Activated CD4-positive, alpha-beta T cell treated with anti-CD3 and anti-CD28 coated beads, Interleukin-2, amount 10 ng/mL, durations not matched to agents 24 days and 14 days (primary cell): ENCODE measurements at regions of chr19 and their contacts with region 1.

Region 1: DNA sequence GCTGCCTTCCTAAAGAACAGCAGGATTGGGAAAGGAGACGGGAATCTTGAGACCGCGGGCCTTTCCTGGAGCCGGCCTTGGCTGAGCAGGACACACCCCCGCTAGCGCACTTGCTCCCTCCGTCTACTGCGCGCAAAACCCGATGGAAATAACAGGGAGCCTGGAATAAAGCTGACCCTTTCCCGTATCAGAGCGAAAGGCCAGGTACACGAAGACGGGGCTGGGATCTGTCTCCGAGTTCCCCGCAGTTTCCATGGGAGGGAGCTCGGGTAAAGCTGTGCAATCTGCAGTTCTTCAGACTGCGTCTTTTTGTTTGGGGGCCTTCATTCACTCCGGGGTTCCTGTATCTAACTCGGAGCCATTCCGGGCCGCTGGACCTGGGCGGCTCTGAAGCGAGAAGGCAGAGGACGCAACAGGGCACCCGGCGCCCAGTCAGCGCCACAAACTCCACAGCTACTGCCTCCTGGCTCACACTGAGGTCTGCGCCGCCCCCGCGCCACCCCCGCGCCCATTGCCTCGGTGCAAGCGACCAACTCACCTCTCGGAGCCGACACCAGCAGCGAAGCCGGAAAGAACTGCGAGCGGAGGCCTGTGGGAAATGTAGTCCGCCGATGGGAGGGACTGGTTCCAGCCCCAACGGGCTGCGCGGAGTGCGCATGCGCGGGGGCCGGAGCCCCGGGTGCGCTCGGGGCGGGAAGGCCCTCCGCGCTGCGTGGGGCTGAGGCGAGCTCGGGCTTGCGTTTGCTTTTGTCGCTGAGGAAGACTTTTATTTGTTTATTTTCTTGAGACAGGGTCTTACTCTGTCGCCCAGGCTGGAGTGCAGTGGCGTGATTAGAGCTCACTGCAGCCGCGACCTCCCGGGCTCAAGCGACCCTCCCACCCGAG is at the start of gene ZFP14:
- DNase-seq: peak; percentile 98
- H3K4me3 Mint-ChIP-seq: peak within 1 kb of the TSS; percentile 84
- H3K27ac Mint-ChIP-seq: peak within 1 kb of the TSS; percentile 90
- H3K4me1 Mint-ChIP-seq: peaks cover 14% of the 10 kb centered on the region
- H3K27me3 Mint-ChIP-seq: no peaks in the 10 kb centered on the region
- total RNA-seq, gene ZFP14: 2.2 and 3.2 TPM in 2 replicates

Region 2: DNA sequence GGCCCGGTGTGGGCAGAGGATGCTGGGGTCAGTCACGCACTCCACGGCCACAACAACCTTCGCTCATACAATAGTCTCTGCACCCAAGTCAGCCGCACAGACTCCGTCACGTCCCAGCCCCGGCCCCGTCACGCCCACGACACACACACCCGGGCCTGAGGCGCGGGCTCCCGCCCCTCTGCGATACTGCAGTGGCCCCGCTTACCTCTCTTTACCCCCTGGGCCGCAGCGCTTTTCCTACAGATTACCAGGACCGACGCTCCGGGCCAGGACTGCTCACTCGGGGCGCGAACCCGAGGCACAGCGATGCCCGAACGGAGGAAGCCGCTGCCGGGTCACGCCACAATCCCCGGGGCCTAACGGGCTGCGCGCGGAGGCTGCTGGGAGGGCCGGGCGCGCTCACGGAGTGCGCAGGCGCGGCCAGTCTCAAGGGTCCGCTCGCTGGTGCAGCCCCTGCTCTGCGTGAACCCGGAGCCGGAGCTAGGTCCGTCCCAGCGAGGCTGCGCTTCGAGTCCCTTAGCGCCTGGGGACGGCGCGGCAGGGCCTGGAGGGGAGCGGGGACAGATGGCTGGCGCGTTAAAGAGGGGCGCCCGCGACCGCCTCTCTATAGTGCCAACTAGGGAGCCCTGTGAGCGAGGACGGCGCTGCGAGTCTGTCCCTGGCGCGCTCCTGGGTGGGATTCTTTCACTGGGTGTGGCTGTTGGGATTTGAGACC is 39.6 kb after region 1 on chr19 and contains the start of gene ZFP82:
- intact Hi-C with region 1: loop called (anchors 2 kb)
- DNase-seq: peak; percentile 93
- H3K4me3 Mint-ChIP-seq: peak within 1 kb of the TSS; percentile 96
- H3K27ac Mint-ChIP-seq: peak within 1 kb of the TSS; percentile 97
- H3K4me1 Mint-ChIP-seq: peaks cover 14% of the 10 kb centered on the region
- H3K27me3 Mint-ChIP-seq: peaks cover 6% of the 10 kb centered on the region
- total RNA-seq, gene ZFP82: 4.4 and 4.8 TPM in 2 replicates

Region 3: GRCh38 chr19:36605101-36605876 is 226.4 kb after region 1 on chr19 and contains the start of gene ZNF382:
- intact Hi-C with region 1: loop called (anchors 2 kb)
- DNase-seq: peak; percentile 96
- H3K4me3 Mint-ChIP-seq: peak within 1 kb of the TSS; percentile 89
- H3K27ac Mint-ChIP-seq: peak within 1 kb of the TSS; percentile 98
- H3K4me1 Mint-ChIP-seq: peaks cover 22% of the 10 kb centered on the region
- H3K27me3 Mint-ChIP-seq: no peaks in the 10 kb centered on the region
- total RNA-seq, gene ZNF382: 9.5 and 13.2 TPM in 2 replicates

Region 4: DNA sequence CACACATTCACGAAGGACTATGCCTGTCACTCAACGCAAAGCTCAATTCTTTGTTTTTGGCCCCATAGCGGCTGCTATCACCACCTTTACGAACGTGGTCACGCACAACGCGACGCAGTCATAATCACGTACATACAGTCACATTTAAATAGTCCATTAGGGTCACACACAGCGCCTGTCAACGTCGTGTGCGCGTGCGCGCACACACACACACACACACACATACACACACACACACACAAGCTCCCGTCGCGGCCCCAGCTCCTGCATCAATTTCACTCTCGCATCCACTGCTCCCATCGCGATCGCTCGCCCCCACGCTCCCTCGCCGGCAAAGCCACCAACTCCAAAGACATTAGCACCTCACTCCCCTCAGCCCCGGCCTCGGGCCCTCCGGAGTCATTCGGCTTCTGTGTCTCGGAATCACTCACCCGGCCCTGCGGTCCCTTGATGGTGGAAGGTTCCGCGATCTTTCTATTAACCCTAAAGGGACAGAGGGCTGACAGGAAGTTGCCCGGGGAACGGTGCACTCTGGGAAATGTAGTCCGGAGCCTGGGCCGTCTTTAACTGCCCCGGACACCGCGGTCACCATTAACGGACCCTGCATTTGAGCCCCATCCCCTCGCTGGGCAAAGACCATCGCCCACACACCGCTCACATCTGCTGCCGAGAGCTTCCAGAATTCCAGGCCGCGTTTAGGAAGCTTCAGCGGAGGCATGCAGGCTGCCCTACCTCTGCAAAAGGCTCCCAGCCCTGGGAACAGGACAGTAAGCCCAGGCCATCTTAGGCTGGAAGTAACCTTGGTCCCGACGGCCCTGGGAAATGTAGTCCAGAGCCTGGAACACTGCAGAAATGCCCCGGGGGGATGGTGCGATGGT is 459.3 kb after region 1 on chr19 and contains the start of gene ZNF790:
- intact Hi-C with region 1: loop called (anchors 5 kb)
- DNase-seq: peak; percentile 94
- H3K4me3 Mint-ChIP-seq: no peak within 1 kb of the TSS
- H3K27ac Mint-ChIP-seq: peak within 1 kb of the TSS; percentile 49
- H3K4me1 Mint-ChIP-seq: peaks cover 4% of the 10 kb centered on the region
- H3K27me3 Mint-ChIP-seq: no peaks in the 10 kb centered on the region
- total RNA-seq, gene ZNF790: 5.1 and 6.7 TPM in 2 replicates